IMR-90 (cell line): ENCODE measurements at regions of chr3 and their contacts with region 1.

Region 1: DNA sequence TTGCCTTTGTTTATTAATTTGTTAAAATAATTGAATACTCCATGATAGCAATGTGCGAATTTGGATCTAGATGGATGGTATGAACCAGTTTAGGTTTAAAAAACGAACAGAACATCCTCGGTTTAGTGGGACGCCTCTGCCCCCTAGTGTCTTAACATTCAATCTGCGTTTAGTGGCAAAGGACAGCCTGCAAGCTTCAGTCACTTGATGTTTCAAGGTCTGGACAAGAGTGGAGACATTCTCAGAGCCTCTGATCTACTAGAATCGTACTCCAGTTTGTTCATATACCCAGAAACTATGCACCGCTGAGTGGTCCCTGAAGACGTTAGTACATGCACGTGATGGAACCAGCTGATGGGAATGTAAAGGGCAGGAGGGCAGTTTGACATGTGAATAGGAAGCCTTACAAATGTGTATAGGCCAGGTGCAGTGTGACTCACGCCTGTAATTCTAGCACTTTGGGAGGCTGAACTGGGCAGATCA is 17.8 kb upstream of the ATP13A4 start:
- DNase-seq: peak; percentile 64
- ATAC-seq: peak; percentile 96
- H3K4me3 ChIP-seq: no peak overlapping the region
- H3K27ac ChIP-seq: no peak overlapping the region
- H3K4me1 ChIP-seq: no peaks in the 10 kb centered on the region
- H3K27me3 ChIP-seq: 0 out of 2 replicates have a peak, but pooled peaks cover 2% of the 10 kb centered on the region
- CTCF ChIP-seq: peak; percentile 83
- POLR2A ChIP-seq: peak; percentile 29; the same call in 1 of the 2 replicates
- RAD21 ChIP-seq: peak; percentile 84

Region 2: GRCh38 chr3:192467230-192468140 is 1105.0 kb before region 1 on chr3:
- CTCF ChIA-PET with region 1: no interaction called
- POLR2A ChIA-PET with region 1: no interaction called
- dilution Hi-C with region 1: no loop called
- in situ Hi-C with region 1: loop called (anchors 10 kb)
- intact Hi-C with region 1: loop called (anchors 1 kb)
- DNase-seq: peak; percentile 34
- ATAC-seq: peak; percentile 90
- H3K4me3 ChIP-seq: no peak overlapping the region
- H3K27ac ChIP-seq: no peak overlapping the region
- H3K4me1 ChIP-seq: no peaks in the 10 kb centered on the region
- H3K27me3 ChIP-seq: no peaks in the 10 kb centered on the region
- CTCF ChIP-seq: peak; percentile 72
- POLR2A ChIP-seq: no peak
- RAD21 ChIP-seq: peak; percentile 74

Region 3: GRCh38 chr3:192566706-192567290 is 1005.7 kb before region 1 on chr3:
- CTCF ChIA-PET with region 1: interaction called, 4 read pairs
- POLR2A ChIA-PET with region 1: no interaction called
- dilution Hi-C with region 1: no loop called
- in situ Hi-C with region 1: loop called (anchors 10 kb)
- intact Hi-C with region 1: loop called (anchors 1 kb)
- DNase-seq: peak; percentile 84
- ATAC-seq: peak; percentile 98
- H3K4me3 ChIP-seq: no peak overlapping the region
- H3K27ac ChIP-seq: no peak overlapping the region
- H3K4me1 ChIP-seq: no peaks in the 10 kb centered on the region
- H3K27me3 ChIP-seq: no peaks in the 10 kb centered on the region
- CTCF ChIP-seq: peak; percentile 91
- POLR2A ChIP-seq: peak; percentile 42; the same call in 1 of the 2 replicates
- RAD21 ChIP-seq: peak; percentile 89

Region 4: GRCh38 chr3:192917404-192918274 is 654.8 kb before region 1 on chr3 and contains the start of gene MB21D2:
- CTCF ChIA-PET with region 1: no interaction called
- POLR2A ChIA-PET with region 1: no interaction called
- dilution Hi-C with region 1: no loop called
- in situ Hi-C with region 1: no loop called
- intact Hi-C with region 1: loop called (anchors 5 kb)
- DNase-seq: peak; percentile 80
- ATAC-seq: peak; percentile 90
- H3K4me3 ChIP-seq: peak within 1 kb of the TSS; percentile 79
- H3K27ac ChIP-seq: peak within 1 kb of the TSS; percentile 91
- H3K4me1 ChIP-seq: peaks cover 5% of the 10 kb centered on the region
- H3K27me3 ChIP-seq: no peaks in the 10 kb centered on the region
- CTCF ChIP-seq: no peak
- POLR2A ChIP-seq: peak; percentile 90
- RAD21 ChIP-seq: no peak; the same call in none of the 2 replicates
- total RNA-seq, gene MB21D2: 44.8 and 46.4 TPM in 2 replicates

Region 5: GRCh38 chr3:193040836-193041672 is 531.4 kb before region 1 on chr3:
- CTCF ChIA-PET with region 1: interaction called, 15 read pairs
- POLR2A ChIA-PET with region 1: no interaction called
- dilution Hi-C with region 1: no loop called
- in situ Hi-C with region 1: no loop called
- intact Hi-C with region 1: loop called (anchors 5 kb)
- DNase-seq: peak; percentile 60
- ATAC-seq: peak; percentile 56; the same call in 1 of the 2 replicates
- H3K4me3 ChIP-seq: no peak overlapping the region
- H3K27ac ChIP-seq: no peak overlapping the region
- H3K4me1 ChIP-seq: no peaks in the 10 kb centered on the region
- H3K27me3 ChIP-seq: no peaks in the 10 kb centered on the region; the same call in 1 of the 2 replicates
- CTCF ChIP-seq: peak; percentile 65
- POLR2A ChIP-seq: no peak
- RAD21 ChIP-seq: peak; percentile 77

Region 6: DNA sequence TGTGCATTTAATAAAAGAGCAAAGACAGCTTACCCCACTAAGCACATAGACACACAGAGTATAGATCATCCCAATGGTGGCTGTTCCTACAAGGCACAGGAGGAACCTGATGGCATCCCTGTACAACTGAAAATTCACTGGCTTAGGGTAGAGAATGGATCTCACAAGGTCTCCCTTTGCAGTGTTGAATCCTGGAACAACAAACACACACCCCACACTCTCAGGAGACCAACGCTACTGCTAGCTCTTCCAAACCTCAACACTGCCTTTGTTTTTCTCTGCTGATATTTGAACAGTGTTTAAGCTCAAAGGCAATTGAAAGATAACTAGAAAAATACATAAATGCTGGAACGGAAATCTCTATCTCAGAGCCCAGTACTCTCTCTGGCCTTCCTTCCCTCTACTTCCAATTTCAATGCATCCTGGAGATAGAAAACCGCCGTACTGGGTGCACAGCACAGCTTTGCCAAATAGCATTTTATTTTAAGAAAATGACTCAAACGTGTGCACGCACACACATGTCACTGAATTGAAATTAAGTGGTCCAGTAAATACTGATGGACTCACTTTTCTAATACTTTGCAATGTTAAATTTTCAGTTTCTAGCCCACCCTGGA is 106.4 kb before region 1 on chr3:
- CTCF ChIA-PET with region 1: interaction called, 7 read pairs
- POLR2A ChIA-PET with region 1: no interaction called
- dilution Hi-C with region 1: no loop called
- in situ Hi-C with region 1: no loop called
- intact Hi-C with region 1: loop called (anchors 1 kb)
- DNase-seq: no peak
- ATAC-seq: no peak
- H3K4me3 ChIP-seq: no peak overlapping the region
- H3K27ac ChIP-seq: no peak overlapping the region
- H3K4me1 ChIP-seq: no peaks in the 10 kb centered on the region
- H3K27me3 ChIP-seq: no peaks in the 10 kb centered on the region
- CTCF ChIP-seq: no peak
- POLR2A ChIP-seq: no peak
- RAD21 ChIP-seq: no peak